ENCODE measurements at regions of chr18 and their contacts with region 1.

Region 1: DNA sequence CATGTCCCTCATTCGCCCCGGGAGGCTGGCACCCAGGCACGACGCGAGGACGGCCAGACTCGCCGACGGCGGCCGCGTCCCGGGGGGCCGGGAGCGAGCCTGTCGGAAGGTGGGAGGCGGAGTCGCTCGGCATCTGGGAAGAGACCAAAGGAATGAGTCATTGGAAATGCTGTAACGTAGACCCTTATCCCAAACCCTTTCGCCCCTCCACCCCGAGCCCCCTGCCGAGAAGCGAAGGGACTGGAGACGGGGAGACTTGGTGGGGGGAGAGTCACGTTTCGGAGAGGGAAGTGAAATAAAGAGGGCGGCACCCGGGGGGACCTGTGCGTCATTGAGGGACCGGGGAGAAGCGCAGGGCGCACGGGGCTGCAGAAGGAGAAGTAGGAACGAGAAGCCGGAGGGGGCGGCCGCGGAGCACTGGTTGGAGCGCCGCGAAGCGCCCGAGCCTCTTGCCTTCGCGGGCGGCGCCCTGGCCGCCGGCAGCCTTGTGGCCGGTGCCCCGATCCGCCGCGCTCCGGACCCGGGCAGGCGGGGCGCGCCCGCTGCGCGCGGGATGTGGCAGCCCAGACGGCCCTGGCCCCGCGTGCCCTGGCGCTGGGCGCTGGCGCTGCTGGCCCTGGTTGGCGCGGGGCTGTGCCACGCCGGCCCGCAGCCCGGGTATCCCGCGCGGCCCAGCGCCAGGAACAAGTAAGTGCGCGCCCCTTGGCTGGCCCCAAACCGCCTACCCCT is at the start of gene EMILIN2:
- DNase-seq: peak; percentile 93
- ATAC-seq: peak; percentile 82
- H3K4me3 ChIP-seq: peak within 1 kb of the TSS; percentile 54 to 76 (median 61)
- H3K4me3 Mint-ChIP-seq: peak within 1 kb of the TSS; percentile 99
- H3K27ac ChIP-seq: peak within 1 kb of the TSS; percentile 56 to 65
- H3K27ac Mint-ChIP-seq: peak within 1 kb of the TSS; percentile 91
- H3K4me1 ChIP-seq: peaks cover 14 to 37% of the 10 kb centered on the region in 2 donors
- H3K4me1 Mint-ChIP-seq: peaks cover 40% of the 10 kb centered on the region
- H3K27me3 ChIP-seq: peaks cover 0 to 41% (median 21%) of the 10 kb centered on the region in 4 experiments
- H3K27me3 Mint-ChIP-seq: peaks cover 18% of the 10 kb centered on the region
- CTCF ChIP-seq: peak; percentile 39
- total RNA-seq, gene EMILIN2: 48.2 and 52.7 TPM in 2 replicates

Region 2: DNA sequence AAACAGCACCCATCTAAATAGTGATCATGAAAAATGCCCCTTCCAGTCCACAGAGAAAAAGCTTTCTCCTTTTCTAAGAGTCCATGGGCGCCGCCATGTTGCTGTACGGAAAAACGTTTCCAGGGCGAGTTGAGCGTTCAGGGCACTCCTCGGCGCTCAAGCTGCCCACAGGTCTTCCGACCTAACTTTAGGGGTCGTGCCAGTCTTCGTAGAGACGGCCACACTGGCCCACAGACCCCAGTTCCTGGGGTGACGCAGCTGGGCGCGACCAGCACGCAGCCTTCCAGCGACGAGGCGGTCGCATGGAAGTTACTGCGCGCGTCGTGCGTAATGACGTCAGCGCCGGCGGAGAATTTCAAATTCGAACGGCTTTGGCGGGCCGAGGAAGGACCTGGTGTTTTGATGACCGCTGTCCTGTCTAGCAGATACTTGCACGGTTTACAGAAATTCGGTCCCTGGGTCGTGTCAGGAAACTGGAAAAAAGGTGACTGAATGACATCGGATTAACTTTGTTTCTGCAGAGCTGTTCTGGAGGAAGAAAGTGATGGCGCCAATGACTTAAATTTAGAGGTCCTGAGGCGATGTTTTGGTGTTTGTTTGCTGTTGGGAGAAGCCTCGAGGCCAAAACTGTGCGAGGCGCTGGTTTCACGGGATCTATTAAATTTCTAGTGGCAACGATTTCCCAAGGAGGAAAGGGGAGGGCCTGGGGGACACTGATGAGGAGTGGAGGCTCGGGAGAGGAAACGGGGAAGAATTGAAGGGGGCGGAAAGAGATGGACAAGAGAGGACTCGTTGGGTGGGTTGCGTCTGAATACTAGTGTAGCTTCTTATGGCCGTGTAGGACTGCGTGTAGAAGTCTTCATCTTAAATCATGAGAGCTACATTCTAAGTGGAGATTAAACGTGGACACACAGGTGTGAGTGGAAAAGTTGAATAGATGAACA is 275.3 kb before region 1 on chr18 and contains the starts of genes METTL4 and NDC80:
- CTCF ChIA-PET with region 1: interaction called, 3 read pairs
- POLR2A ChIA-PET with region 1: no interaction called
- intact Hi-C with region 1: loop called (anchors 5 kb)
- DNase-seq: peak; percentile 95
- ATAC-seq: peak; percentile 93
- H3K4me3 ChIP-seq: peak within 1 kb of the TSS; percentile 70 to 99 (median 81)
- H3K4me3 Mint-ChIP-seq: peak within 1 kb of the TSS; percentile 99
- H3K27ac ChIP-seq: peak within 1 kb of the TSS; percentile 97 to 98
- H3K27ac Mint-ChIP-seq: peak within 1 kb of the TSS; percentile 99
- H3K4me1 ChIP-seq: peaks cover 22 to 23% of the 10 kb centered on the region in 2 donors
- H3K4me1 Mint-ChIP-seq: peaks cover 45% of the 10 kb centered on the region
- H3K27me3 ChIP-seq: no peaks in the 10 kb centered on the region
- H3K27me3 Mint-ChIP-seq: no peaks in the 10 kb centered on the region
- CTCF ChIP-seq: no peak
- total RNA-seq, gene METTL4: 23.9 and 31.6 TPM in 2 replicates
- total RNA-seq, gene NDC80: 3.7 and 3.9 TPM in 2 replicates

Region 3: DNA sequence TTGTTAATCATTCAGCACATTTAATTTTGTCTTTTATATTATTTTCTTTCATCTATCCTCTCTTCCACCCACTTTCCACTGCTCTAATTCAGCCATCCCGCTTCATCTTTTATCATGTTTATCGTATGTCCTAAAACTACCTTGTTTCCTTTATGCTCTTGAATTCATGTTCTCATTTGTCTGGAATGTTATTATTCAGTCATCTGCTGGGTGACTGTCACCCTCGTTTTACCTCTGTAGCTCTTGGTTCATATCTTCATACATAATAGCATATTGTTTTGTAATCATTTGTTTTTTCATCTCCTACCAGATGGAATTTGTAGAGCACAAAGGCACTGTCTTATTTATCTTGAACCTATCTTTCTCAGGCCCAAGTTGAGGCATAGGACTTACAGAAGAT is 154.3 kb before region 1 on chr18:
- CTCF ChIA-PET with region 1: no interaction called
- POLR2A ChIA-PET with region 1: no interaction called
- intact Hi-C with region 1: no loop called
- DNase-seq: no peak
- ATAC-seq: no peak
- H3K4me3 ChIP-seq: no peak overlapping the region
- H3K4me3 Mint-ChIP-seq: no peak overlapping the region
- H3K27ac ChIP-seq: no peak overlapping the region
- H3K27ac Mint-ChIP-seq: peak overlapping the region; percentile 0
- H3K4me1 ChIP-seq: peaks cover 13 to 14% of the 10 kb centered on the region in 2 donors
- H3K4me1 Mint-ChIP-seq: peaks cover 19% of the 10 kb centered on the region
- H3K27me3 ChIP-seq: no peaks in the 10 kb centered on the region
- H3K27me3 Mint-ChIP-seq: no peaks in the 10 kb centered on the region
- CTCF ChIP-seq: no peak

Region 4: DNA sequence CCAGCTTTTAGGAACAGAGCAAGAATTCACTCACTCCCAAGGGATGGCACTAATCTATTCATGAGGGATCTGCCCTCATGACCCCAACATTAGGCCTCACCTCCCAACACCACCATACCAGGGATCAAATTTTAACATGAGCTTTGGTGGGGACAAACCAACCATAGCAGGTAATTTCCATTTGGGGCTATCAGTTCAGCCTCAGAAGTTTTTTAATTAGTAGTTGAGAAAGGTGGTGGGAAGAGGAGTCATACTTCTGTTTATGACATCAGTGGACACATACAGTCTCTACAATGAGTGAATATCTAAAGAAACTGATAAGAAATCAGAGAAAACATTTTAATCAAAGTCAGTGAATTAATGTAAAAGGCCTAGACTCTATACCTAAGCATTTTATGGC is 59.6 kb before region 1 on chr18:
- CTCF ChIA-PET with region 1: no interaction called
- POLR2A ChIA-PET with region 1: no interaction called
- intact Hi-C with region 1: loop called (anchors 5 kb)
- DNase-seq: no peak
- ATAC-seq: no peak
- H3K4me3 ChIP-seq: no peak overlapping the region
- H3K4me3 Mint-ChIP-seq: no peak overlapping the region
- H3K27ac ChIP-seq: no peak overlapping the region
- H3K27ac Mint-ChIP-seq: peak overlapping the region; percentile 1
- H3K4me1 ChIP-seq: no peaks in the 10 kb centered on the region
- H3K4me1 Mint-ChIP-seq: peaks cover 8% of the 10 kb centered on the region
- H3K27me3 ChIP-seq: no peaks in the 10 kb centered on the region
- H3K27me3 Mint-ChIP-seq: no peaks in the 10 kb centered on the region
- CTCF ChIP-seq: no peak

Region 5: DNA sequence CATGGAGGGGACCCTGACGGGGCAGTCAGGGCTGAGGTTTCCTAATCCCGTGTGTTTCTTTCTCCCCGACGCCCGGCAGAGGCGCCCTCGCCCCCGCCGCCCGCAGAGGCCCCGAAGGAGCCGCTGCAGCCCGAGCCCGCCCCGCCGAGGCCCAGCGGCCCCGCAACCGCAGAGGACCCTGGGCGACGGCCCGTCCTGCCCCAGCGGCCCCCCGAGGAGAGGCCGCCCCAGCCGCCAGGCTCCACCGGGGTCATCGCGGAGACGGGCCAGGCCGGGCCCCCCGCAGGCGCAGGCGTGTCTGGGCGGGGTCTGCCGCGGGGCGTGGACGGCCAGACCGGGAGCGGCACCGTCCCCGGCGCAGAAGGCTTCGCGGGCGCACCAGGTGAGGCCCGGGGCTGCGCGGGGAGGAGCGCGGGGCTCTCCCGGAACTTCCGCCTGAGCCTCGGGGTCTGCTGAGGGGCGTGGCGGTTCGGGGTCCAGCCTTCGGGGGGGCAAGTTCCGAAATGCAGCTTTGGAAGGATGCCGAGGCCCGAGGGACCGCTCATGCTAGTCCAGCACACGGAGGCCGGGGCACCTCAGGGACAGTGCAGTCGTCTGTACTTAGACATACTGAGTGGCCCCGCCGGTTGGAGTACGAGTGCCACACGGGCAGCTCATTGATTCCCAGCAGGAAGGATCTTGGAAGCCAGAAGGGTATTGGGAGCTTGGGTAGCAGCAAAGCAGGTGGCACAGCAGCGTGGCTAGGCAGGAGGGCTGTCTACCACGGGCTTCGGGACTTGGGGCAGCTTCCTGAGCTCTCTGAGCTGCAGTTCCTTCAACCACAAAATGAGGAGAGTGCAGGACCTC is 60.1 kb after region 1 on chr18:
- CTCF ChIA-PET with region 1: interaction called, 3 read pairs
- POLR2A ChIA-PET with region 1: no interaction called
- intact Hi-C with region 1: loop called (anchors 5 kb)
- DNase-seq: peak; percentile 69
- ATAC-seq: peak; percentile 68
- H3K4me3 ChIP-seq: peak overlapping the region in 4 of 5 experiments; percentile 48 to 77 (median 68)
- H3K4me3 Mint-ChIP-seq: peak overlapping the region; percentile 80
- H3K27ac ChIP-seq: peak overlapping the region; percentile 0 to 44
- H3K27ac Mint-ChIP-seq: peak overlapping the region; percentile 10
- H3K4me1 ChIP-seq: peaks cover 4 to 17% of the 10 kb centered on the region in 2 donors
- H3K4me1 Mint-ChIP-seq: peaks cover 16% of the 10 kb centered on the region
- H3K27me3 ChIP-seq: peaks cover 0 to 5% (median 2%) of the 10 kb centered on the region in 4 experiments
- H3K27me3 Mint-ChIP-seq: no peaks in the 10 kb centered on the region
- CTCF ChIP-seq: peak; percentile 56

Region 6: DNA sequence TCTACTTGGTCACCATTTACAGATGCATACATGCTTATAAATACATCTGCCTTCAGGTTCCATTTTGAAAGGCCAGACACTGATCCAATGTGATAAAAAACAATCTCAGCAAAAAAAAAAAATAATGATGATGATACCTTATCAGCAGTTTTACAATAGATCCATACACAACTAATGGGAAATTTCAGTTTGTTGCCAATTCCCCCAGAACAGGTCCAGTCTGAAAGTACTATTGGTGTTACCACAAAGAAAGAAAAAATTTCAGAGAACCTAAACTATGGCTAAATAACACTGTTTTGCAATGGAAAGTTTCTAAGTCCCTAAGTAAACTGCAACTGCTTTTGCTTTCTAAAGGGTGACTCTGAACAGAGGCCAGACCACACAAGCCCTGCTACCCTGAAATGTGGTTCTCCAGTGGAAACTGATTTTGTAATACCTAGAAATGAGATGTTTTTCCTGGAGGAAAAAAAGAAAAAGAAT is 112.1 kb after region 1 on chr18:
- CTCF ChIA-PET with region 1: no interaction called
- POLR2A ChIA-PET with region 1: no interaction called
- intact Hi-C with region 1: loop called (anchors 5 kb)
- DNase-seq: peak; percentile 30
- ATAC-seq: peak; percentile 15
- H3K4me3 ChIP-seq: peak overlapping the region in 1 of 5 experiments; percentile 42
- H3K4me3 Mint-ChIP-seq: peak overlapping the region; percentile 50
- H3K27ac ChIP-seq: peak overlapping the region; percentile 82 to 84
- H3K27ac Mint-ChIP-seq: peak overlapping the region; percentile 91
- H3K4me1 ChIP-seq: peaks cover 70 to 75% of the 10 kb centered on the region in 2 donors
- H3K4me1 Mint-ChIP-seq: peaks cover 74% of the 10 kb centered on the region
- H3K27me3 ChIP-seq: no peaks in the 10 kb centered on the region
- H3K27me3 Mint-ChIP-seq: no peaks in the 10 kb centered on the region
- CTCF ChIP-seq: no peak

Region 7: DNA sequence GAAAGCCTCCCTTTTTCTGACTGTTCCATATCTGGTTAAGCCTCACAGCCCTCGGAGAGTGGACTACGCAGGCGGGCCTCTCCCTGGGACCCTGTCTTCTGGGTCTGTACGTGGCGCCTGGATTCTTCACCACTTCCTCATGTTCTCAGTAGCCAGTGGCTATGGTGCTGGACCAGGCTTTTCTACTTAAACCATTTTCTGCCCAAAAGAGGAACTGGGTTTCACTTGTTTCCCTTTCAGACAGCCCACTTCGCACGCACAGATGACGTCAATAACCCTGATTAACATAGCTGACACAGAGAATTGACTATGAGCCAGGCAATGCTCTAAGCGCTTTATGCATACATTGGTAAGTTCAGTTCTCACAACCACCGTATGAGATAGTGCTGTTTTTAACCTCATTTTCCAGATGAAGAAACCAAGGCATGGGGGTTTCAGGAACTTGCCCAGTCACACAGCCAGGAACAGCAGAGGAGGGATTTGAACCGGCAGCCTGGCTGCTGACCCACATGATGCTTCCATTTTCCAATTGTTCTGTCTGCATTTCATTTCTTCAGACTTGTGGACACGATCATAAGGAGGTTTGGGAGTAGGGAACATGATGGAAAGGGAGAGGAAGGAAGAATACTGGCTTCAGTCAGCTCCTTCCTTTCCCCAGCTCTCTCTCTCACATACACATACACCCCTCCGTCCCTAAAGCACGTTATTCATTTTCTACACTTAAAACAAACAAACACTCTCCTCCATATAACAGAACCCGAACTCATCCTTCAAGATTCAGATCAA is 331.3 kb after region 1 on chr18:
- CTCF ChIA-PET with region 1: no interaction called
- POLR2A ChIA-PET with region 1: no interaction called
- intact Hi-C with region 1: loop called (anchors 1 kb)
- DNase-seq: peak; percentile 95
- ATAC-seq: peak; percentile 84
- H3K4me3 ChIP-seq: peak overlapping the region in 3 of 5 experiments; percentile 37 to 59 (median 44)
- H3K4me3 Mint-ChIP-seq: peak overlapping the region; percentile 77
- H3K27ac ChIP-seq: peak overlapping the region; percentile 53 to 78
- H3K27ac Mint-ChIP-seq: peak overlapping the region; percentile 97
- H3K4me1 ChIP-seq: peaks cover 20 to 27% of the 10 kb centered on the region in 2 donors
- H3K4me1 Mint-ChIP-seq: peaks cover 28% of the 10 kb centered on the region
- H3K27me3 ChIP-seq: no peaks in the 10 kb centered on the region
- H3K27me3 Mint-ChIP-seq: no peaks in the 10 kb centered on the region
- CTCF ChIP-seq: no peak

Measured in B cell (primary cell).